Caco-2 (cell line): ENCODE measurements at regions of chr7 and their contacts with region 1.

Region 1: DNA sequence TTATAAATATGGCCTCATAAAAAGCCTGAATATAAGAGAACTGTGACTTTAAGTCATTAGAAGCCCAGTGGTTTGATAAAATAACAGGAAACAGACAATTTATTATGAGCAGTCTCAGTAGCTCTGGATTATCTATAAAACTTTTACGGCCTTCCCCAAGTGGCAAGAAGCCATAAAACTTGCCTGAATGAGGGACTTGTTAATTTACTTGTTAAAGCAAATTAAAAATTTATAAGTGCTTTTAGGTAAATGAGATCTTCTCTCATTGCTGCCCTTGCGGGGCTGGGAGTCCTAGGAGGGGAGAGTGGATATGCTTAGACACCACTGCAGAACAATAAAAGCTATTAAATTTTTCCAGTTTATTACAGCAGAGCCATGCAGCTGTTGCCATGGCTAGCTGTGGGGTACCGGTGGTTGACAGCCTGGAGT is 499.9 kb downstream of the AUTS2 start:
- DNase-seq: no peak
- H3K4me3 ChIP-seq: no peak overlapping the region
- H3K4me3 Mint-ChIP-seq: no peak overlapping the region
- H3K27ac Mint-ChIP-seq: no peak overlapping the region
- H3K4me1 ChIP-seq: no peaks in the 10 kb centered on the region
- H3K4me1 Mint-ChIP-seq: no peaks in the 10 kb centered on the region
- H3K27me3 ChIP-seq: no peaks in the 10 kb centered on the region; the same call in 1 of the 2 replicates
- H3K27me3 Mint-ChIP-seq: peaks cover 5% of the 10 kb centered on the region
- CTCF ChIP-seq: no peak

Region 2: DNA sequence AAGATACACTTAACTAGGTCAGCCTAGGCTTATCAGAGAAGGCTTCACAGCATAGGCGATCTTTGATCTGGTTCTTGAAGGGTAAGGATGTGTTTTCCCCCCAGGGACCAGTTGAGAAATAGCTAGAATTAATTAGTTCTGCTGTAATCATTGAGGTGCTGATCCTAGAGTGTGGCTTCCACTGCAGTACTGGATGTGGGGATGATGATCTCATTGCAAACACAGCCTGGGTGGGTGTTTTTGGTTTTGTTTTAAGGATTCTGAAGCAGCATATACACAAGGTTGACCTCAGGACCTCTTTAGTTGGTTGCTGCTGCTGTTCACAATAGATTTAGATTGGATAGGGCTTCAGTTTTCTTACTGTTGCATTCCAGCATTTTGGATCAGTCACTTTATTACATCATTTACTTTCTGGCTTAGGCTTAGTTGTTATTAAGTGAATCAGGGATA is 340.1 kb before region 1 on chr7:
- CTCF ChIA-PET with region 1: no interaction called
- POLR2A ChIA-PET with region 1: no interaction called
- intact Hi-C with region 1: no loop called
- DNase-seq: no peak
- H3K4me3 ChIP-seq: no peak overlapping the region
- H3K4me3 Mint-ChIP-seq: no peak overlapping the region
- H3K27ac Mint-ChIP-seq: no peak overlapping the region
- H3K4me1 ChIP-seq: no peaks in the 10 kb centered on the region; the same call in 1 of the 2 replicates
- H3K4me1 Mint-ChIP-seq: peaks cover 19% of the 10 kb centered on the region
- H3K27me3 ChIP-seq: no peaks in the 10 kb centered on the region
- H3K27me3 Mint-ChIP-seq: no peaks in the 10 kb centered on the region
- CTCF ChIP-seq: no peak

Region 3: DNA sequence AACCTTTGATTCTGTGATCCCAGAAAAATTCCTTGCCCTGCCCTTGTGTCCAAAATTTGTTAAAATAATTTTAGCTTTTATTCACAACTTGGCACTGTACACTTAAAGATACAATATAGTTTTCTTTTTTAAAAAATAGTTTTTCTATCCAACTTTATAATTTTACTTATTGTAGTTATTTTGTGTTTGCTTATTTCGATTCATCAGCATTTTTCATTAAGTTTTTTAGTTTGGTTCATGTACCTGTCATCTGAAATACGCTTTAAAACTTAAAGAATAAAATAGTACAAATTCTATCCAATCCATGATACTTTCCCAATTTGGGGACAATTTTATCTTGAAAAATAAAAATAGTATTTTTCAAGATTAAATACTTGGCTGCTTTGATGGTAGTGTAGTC is 14.9 kb after region 1 on chr7:
- CTCF ChIA-PET with region 1: interaction called, 11 read pairs
- POLR2A ChIA-PET with region 1: no interaction called
- intact Hi-C with region 1: no loop called
- DNase-seq: no peak
- H3K4me3 ChIP-seq: no peak overlapping the region
- H3K4me3 Mint-ChIP-seq: no peak overlapping the region
- H3K27ac Mint-ChIP-seq: no peak overlapping the region
- H3K4me1 ChIP-seq: peaks cover 3% of the 10 kb centered on the region; the same call in 1 of the 2 replicates
- H3K4me1 Mint-ChIP-seq: peaks cover 5% of the 10 kb centered on the region
- H3K27me3 ChIP-seq: no peaks in the 10 kb centered on the region
- H3K27me3 Mint-ChIP-seq: peaks cover 4% of the 10 kb centered on the region
- CTCF ChIP-seq: no peak